Right ventricle myocardium inferior (tissue), 1 donor: ENCODE measurements at regions of chr11 and their contacts with region 1.

Region 1: GRCh38 chr11:126024123-126024522 is 38.5 kb downstream of the CDON start:
- DNase-seq: no peak
- ATAC-seq: peak; percentile 92

Region 2: DNA sequence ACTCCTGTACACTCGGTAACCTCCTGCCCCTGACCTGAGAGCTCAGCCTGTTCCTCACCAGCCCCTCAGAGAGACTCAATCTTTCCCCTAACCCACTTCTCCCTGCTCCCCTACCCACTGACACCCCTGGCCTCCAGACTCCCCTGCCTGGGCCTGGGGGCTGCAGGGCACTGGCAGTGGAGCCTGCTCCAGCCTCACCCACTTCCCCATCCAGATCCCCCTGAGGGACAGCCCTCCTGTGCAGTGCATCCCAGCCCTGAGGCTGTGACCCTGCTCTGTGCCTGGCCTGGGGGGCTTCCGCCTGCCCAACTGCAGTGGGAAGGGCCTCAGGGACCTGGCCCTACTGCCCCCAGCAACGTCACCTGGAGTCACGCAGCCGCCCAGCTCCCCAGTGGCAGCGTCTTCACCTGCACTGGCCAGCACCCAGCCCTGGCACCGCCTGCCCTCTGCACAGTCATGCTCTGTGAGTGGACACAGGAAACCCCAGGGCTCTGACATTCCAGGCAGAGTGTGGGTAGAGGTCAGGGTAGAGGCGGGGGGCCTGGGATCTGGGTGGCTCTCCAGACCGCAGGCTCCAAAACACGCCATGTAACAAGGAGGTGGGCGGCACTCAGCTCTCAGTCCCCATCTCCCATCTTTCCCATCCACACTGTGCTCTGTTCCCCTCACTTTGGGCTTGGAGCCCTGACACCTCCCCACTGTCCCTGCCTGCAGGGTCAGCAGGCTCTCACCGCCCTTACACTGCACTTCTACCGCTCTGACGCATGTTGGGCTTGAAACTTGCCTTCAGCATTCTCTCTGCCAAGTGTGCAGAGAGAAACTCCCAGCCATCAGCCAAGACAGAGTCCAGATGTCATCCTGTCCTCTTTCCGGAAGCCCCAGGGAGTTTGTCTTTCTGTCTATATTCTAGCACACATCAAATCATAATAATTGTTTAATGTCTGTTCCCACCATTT is 73.1 kb before region 1 on chr11:
- intact Hi-C with region 1: loop called (anchors 10 kb)
- DNase-seq: peak; percentile 88
- ATAC-seq: peak; percentile 86

Region 3: GRCh38 chr11:125971618-125972017 is 52.5 kb before region 1 on chr11:
- intact Hi-C with region 1: no loop called
- DNase-seq: no peak
- ATAC-seq: peak; percentile 52